GM10248 (cell line): ENCODE measurements at regions of chr12 and their contacts with region 1.

Region 1: DNA sequence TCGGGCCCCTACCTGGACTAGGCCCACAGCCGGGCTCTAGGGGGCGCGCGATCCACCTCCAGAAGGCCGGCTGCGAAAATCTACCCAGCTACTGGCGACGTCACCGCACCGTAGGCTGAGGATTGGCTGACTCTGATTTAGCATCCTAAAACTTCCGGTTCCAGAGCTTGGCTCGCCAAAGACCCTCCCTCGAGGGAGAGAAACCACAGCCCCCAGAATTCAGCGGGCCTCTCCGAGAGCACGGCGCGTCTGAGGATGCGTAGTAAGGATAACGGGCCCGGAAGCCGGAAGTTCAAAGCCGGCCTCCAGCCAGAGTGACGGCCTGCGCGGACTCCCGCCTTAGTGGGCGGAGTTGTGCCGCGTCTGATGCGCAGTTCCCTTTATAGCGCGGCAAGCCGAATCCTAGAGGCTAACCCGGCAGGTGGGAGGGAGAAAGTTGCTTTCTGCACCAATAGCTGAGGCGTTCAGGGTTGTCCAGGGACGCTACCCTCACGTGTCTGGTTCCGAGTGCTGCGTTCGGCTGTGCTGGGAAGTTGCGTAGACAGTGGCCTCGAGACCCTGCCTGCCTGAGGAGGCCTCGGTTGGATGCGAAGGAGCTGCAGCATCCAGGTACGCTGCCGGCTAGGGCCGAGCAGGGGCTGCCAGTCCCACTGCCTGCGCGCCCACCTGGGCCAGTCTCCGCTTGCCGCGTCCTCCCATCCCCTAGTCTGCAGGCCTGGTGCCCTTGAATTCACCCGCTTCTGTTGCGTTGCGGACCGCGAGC is at the start of gene COX14:
- DNase-seq: peak; percentile 96
- CTCF ChIP-seq: peak; percentile 91

Region 2: GRCh38 chr12:49939307-49939706 is 172.6 kb before region 1 on chr12:
- CTCF ChIA-PET with region 1: no interaction called
- POLR2A ChIA-PET with region 1: no interaction called
- DNase-seq: no peak
- CTCF ChIP-seq: no peak

Region 3: GRCh38 chr12:49952391-49953055 is 159.4 kb before region 1 on chr12:
- CTCF ChIA-PET with region 1: no interaction called
- POLR2A ChIA-PET with region 1: no interaction called
- DNase-seq: no peak
- CTCF ChIP-seq: no peak

Region 4: DNA sequence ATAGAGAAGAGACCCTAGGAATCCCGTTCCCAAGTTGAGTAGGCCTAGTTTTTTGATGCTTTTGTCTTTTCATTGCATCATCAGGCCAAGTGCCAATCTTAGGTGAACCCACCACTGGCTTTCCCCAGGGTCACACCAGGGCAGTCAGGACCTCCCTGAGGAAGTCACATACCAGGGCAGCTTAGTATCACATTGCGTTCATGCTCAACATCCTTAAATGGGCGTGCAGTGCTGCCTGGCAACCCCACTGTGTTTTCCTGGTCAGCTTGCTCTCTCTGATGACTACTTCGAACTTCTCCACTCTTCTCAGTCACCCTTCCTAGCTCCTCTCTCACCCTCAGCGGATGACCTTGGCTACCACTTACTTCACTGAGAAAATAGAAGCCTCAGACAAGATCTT is 45.4 kb before region 1 on chr12:
- CTCF ChIA-PET with region 1: interaction called, 34 read pairs
- POLR2A ChIA-PET with region 1: no interaction called
- DNase-seq: no peak
- CTCF ChIP-seq: no peak

Region 5: DNA sequence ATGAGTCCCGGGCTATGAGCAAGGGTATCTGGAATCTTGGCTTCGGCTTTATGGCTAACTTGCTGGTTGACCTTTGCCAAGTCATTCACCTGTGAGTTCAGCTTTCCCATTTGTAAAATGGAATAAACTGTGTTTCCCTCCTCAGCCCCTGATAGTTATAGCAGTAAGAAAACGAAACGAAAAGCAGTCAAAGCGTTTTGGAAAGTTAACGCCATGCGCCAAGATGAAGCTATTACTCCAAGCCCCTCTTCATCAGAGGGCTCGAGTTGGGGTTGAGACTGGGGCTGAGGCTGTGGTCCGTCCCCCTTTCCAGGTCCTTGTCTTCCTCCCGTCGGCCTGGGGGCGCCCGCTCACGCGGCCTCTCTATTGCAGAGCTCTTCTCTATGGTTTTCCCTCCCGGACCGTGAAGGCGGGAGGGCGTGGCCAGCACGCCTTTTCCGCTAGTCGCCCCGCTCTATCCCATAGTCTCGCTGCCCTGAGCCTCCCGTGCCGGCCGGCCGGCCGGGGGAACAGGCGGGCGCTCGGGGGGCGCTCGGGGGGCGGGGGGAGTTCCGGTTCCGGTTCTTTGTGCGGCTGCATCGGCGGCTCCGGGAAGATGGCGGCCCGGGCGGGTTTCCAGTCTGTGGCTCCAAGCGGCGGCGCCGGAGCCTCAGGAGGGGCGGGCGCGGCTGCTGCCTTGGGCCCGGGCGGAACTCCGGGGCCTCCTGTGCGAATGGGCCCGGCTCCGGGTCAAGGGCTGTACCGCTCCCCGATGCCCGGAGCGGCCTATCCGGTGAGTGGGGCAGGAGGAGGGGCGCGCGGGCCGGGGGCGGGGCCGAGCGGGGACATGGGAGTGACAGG is 26.9 kb before region 1 on chr12 and contains the start of gene SMARCD1:
- CTCF ChIA-PET with region 1: interaction called, 113 read pairs
- POLR2A ChIA-PET with region 1: interaction called, 12 read pairs
- DNase-seq: peak; percentile 94
- CTCF ChIP-seq: peak; percentile 78

Region 6: GRCh38 chr12:50142993-50143392 is 31.1 kb after region 1 on chr12:
- CTCF ChIA-PET with region 1: interaction called, 54 read pairs
- POLR2A ChIA-PET with region 1: no interaction called
- DNase-seq: no peak
- CTCF ChIP-seq: no peak

Region 7: DNA sequence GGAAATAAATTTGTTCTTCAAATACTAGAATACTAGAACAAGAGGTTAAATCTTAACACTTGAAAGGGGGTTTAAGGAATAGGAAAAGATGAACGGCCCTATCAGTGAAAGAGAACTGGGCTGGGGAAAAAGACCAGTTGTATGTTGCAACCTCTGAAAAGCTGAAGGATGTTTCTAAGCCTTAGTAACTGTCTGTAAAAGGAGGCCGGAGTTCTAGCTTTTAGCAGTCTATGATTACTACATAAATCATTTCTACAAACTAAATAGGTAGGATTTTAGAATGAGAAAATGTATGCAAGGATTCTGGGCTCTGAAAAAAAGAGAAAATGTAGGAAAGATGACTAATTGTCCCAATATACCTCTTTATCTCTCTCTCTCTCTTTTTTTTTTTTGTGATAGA is 50.4 kb after region 1 on chr12:
- CTCF ChIA-PET with region 1: interaction called, 37 read pairs
- POLR2A ChIA-PET with region 1: interaction called, 6 read pairs
- DNase-seq: no peak
- CTCF ChIP-seq: no peak

Region 8: GRCh38 chr12:50174971-50175715 is 63.3 kb after region 1 on chr12:
- CTCF ChIA-PET with region 1: interaction called, 91 read pairs
- POLR2A ChIA-PET with region 1: interaction called, 4 read pairs
- DNase-seq: peak; percentile 39
- CTCF ChIP-seq: peak; percentile 38

Region 9: DNA sequence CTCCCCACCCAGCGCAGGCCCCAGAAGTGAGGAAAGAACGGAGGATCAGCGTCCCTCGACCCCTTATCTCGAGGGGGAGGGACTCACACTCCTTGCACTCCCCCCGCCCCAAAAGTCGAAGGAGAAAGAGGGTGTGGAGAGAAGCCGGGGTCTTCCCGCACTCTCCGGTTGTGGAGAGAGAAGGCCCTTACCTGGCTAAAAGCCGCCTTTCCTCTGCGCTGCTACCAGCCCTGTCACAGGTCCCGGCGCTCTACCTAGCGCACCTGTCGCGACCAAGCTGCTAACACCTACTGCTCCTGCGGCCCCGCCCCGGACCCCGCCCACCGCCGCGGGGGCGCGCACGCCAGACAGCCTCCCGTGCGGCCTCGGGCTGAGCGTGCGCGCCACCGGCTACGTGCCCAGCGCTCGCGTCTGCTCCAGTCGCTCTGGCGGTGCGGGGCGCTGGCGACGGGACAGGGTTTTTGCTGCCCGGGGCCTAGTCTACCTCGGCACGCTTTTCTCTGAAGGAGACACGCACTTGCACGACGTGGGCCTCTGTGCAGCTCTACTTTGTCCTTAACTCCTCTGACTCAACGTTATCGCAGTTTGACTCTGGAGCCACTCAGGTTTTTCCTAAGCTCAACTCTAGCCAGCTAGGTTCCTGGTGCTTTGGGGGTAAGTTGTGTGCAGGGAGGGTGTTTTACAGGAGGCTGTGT is 171.5 kb after region 1 on chr12 and contains the start of gene LIMA1:
- CTCF ChIA-PET with region 1: interaction called, 10 read pairs
- POLR2A ChIA-PET with region 1: no interaction called
- DNase-seq: peak; percentile 97
- CTCF ChIP-seq: no peak